Activated CD4-positive, alpha-beta T cell treated with anti-CD3 and anti-CD28 coated beads for 36 hours (primary cell): ENCODE measurements at regions of chr1 and their contacts with region 1.

Region 1: GRCh38 chr1:155091071-155091709 is 12.6 kb downstream of the EFNA3 start:
- DNase-seq: peak; percentile 90
- ATAC-seq: peak; percentile 88
- H3K4me3 Mint-ChIP-seq: no peak overlapping the region
- H3K27ac Mint-ChIP-seq: no peak overlapping the region
- H3K4me1 Mint-ChIP-seq: peaks cover 7% of the 10 kb centered on the region
- H3K27me3 Mint-ChIP-seq: peaks cover 6% of the 10 kb centered on the region

Region 2: DNA sequence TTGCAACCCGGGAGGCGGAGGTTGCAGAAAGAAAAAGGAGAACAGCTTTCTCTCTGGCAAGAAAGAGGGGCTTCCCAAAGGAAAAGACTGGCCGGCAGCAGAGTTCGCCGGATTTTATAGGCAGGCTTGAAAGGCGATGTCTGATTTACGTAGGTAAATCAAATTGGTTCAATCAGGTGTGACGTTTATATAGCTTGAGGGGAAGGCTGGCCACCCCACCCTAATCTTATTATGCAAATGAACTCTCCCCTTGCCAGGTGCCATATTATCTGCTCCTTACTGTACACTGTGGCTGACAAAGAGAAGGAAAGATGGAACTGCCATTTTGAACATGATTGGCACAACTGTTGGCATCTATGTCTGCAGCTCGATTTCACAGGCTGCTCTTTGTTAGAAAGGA is 1380.2 kb before region 1 on chr1:
- CTCF ChIA-PET with region 1: no interaction called
- POLR2A ChIA-PET with region 1: no interaction called
- intact Hi-C with region 1: no loop called
- DNase-seq: no peak
- ATAC-seq: no peak
- H3K4me3 Mint-ChIP-seq: no peak overlapping the region
- H3K27ac Mint-ChIP-seq: no peak overlapping the region
- H3K4me1 Mint-ChIP-seq: no peaks in the 10 kb centered on the region
- H3K27me3 Mint-ChIP-seq: peaks cover 9% of the 10 kb centered on the region

Region 3: DNA sequence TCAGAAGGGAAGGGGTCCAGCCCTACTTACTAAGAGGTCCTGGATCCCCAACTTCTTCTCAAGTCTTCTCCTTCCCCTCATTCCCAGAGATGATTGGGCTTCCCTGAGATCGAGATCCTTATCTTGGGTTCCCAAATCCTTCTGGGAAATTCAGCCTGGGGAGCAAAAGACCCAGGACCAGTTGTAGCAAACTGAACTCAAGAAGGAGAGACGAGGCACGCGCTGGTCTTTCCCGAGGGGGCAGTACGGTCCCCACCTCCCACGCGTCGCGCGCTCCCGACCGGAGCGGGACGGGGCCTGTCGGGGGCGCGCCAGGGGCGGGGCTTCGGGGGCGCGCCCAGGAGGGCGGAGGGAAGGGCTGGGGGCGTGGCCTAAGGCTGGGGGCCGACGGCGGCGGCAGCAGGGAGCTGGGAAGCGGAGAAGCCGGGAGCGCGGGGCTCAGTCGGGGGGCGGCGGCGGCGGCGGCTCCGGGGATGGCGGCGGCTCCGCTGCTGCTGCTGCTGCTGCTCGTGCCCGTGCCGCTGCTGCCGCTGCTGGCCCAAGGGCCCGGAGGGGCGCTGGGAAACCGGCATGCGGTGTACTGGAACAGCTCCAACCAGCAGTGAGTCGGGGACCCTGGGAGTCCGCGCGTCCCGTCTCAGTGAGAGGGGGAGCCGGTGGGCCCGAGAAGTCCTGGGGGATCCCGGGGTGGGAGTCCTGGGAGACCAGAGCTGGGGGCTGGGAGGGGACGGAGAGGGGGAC is 12.6 kb before region 1 on chr1 and contains the start of gene EFNA3:
- CTCF ChIA-PET with region 1: interaction called, 15 read pairs
- POLR2A ChIA-PET with region 1: no interaction called
- intact Hi-C with region 1: no loop called
- DNase-seq: peak; percentile 83
- ATAC-seq: peak; percentile 34
- H3K4me3 Mint-ChIP-seq: peak within 1 kb of the TSS; percentile 61
- H3K27ac Mint-ChIP-seq: peak within 1 kb of the TSS; percentile 15
- H3K4me1 Mint-ChIP-seq: peaks cover 46% of the 10 kb centered on the region
- H3K27me3 Mint-ChIP-seq: peaks cover 31% of the 10 kb centered on the region
- total RNA-seq, gene EFNA3: 5.1 to 6.9 TPM

Region 4: DNA sequence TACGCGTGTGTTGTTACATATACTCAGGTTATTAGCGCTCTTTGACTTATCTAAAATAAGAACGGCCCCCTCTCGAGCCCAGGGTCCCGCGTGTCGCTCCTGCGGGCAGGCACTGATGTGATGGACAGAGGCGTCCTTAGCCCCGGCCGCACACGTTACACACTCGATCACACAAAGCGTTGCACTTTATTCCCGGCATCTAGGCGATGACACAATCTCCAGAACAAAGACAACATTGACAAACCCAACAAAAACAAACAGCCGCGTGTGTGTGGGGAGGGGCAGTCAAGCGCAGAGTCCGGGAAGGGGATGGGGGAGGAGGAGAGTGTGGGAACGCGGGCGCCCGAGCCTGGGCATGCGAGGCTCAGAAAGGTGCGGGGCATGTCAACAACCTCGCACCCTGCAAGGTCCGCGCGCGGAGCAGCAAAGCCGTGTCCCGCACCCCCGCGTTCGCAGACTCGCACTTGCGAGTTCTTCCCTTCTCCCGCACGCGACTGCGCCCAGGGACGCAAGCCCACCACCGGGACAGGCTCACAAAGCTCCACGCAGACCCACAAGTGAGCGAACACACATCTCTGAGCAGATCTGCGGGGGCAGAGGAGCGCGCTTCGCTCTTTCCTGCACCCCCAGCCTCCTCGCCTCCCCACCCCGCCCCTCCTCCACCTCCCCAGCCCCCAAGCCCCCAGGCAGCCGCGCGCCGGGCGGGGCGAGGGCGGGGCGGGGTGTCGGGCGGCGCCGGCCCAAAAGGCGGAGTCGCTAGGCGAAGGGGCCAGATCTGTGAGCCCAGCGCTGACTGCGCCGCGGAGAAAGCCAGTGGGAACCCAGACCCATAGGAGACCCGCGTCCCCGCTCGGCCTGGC is 36.1 kb after region 1 on chr1 and contains the start of gene EFNA1:
- CTCF ChIA-PET with region 1: interaction called, 9 read pairs
- POLR2A ChIA-PET with region 1: no interaction called
- intact Hi-C with region 1: loop called in 1 of 2 experiments (anchors 5 kb)
- DNase-seq: peak; percentile 55
- ATAC-seq: peak; percentile 48
- H3K4me3 Mint-ChIP-seq: peak within 1 kb of the TSS; percentile 66
- H3K27ac Mint-ChIP-seq: peak within 1 kb of the TSS; percentile 55
- H3K4me1 Mint-ChIP-seq: peaks cover 32% of the 10 kb centered on the region
- H3K27me3 Mint-ChIP-seq: peaks cover 20% of the 10 kb centered on the region
- total RNA-seq, gene EFNA1: 0.82 to 1.1 TPM

Region 5: DNA sequence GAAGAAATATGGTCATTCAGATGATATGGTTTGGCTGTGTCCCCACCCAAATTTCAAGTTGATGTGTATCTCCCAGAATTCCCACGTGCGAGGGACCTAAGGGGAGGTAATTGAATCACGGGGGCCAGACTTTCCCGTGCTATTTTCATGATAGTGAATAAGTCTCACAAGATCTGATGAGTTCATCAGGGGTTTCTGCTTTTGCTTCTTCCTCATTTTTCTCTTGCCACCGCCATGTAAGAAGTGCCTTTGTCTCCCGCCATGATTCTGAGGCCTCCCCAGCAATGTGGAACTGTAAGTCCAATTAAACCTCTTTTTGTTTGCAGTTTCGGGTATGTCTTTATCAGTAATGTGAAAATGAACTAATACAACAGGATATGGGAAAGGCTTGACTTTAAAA is 50.6 kb after region 1 on chr1:
- CTCF ChIA-PET with region 1: interaction called, 10 read pairs
- POLR2A ChIA-PET with region 1: no interaction called
- intact Hi-C with region 1: no loop called
- DNase-seq: no peak
- ATAC-seq: no peak
- H3K4me3 Mint-ChIP-seq: no peak overlapping the region
- H3K27ac Mint-ChIP-seq: no peak overlapping the region
- H3K4me1 Mint-ChIP-seq: peaks cover 27% of the 10 kb centered on the region
- H3K27me3 Mint-ChIP-seq: peaks cover 3% of the 10 kb centered on the region

Region 6: DNA sequence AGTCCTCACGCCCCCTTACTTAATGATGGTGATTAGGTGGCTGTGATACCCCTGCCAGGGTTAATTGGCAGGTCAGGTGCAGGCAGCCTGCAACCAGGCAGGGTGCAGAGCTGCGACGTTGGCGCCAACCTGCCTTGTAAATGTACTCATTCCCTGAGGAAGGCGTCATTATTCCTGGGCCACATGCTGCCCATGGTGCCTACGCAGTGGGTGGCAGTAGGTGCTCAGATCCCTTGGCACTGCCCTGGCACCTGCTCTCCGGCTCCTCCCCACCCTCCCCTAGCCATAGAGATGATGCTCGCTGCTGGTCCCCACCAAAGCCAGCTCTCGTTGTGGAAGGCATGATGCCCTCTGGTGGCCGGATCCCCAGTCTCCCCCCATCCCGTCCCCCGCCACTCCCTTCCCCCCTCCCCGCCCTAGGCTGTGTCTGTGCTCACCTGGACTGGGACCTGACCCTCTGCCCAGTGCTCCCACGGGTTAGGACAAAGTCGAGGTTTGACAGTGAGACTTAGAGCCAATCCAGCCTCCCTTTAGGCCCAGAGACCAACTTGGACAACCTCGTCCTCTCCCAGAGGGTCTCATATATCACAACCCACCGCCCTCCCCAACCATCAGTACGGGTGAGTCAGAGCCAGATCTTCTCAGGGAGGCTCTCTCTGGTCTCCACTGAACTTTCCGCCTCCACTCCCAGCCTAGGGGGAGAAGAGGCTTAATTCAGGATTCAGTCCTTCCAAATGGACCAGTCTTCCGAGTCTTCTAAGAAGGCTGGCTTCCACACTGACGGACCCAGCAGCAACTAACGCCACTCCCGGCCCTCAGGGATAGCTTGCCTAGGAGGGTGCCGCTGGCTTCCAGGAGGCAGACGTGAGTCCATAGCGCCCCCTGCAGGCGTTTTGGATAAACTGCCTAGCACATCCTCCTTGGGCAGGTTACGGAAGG is 76.2 kb after region 1 on chr1:
- CTCF ChIA-PET with region 1: interaction called, 72 read pairs
- POLR2A ChIA-PET with region 1: interaction called, 10 read pairs
- intact Hi-C with region 1: loop called (anchors 1 kb)
- DNase-seq: peak; percentile 95
- ATAC-seq: peak; percentile 88
- H3K4me3 Mint-ChIP-seq: peak overlapping the region; percentile 21
- H3K27ac Mint-ChIP-seq: peak overlapping the region; percentile 1
- H3K4me1 Mint-ChIP-seq: peaks cover 26% of the 10 kb centered on the region
- H3K27me3 Mint-ChIP-seq: no peaks in the 10 kb centered on the region